Heart right ventricle (tissue), 16 donors: ENCODE measurements at regions of chr11 and their contacts with region 1.

Region 1: DNA sequence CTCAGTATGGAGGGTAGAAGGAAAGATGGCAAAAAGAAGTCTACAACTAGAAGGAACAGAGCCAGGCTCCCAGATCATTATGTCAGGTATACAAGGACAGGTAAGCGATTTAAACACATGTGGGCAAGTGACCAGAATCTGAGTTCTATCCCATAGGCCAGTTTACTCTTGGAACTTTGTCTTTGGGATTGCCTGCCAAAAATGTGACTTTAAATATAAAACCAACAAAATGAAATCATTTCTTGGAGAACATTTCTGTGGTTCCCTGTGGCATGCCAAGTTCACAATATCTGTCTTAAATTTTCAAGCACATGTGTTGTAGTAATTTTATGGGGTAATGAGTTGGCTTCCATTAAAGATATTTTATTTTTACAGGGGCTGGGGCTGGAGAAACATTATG is 141.0 kb downstream of the SLC17A6 start:
- DNase-seq: no peak
- ATAC-seq: no peak
- H3K4me3 ChIP-seq: no peak overlapping the region
- H3K27ac ChIP-seq: no peak overlapping the region
- H3K4me1 ChIP-seq: no peaks in the 10 kb centered on the region
- H3K27me3 ChIP-seq: no peaks in the 10 kb centered on the region
- CTCF ChIP-seq: no peak

Region 2: GRCh38 chr11:22467736-22468135 is 11.5 kb before region 1 on chr11:
- intact Hi-C with region 1: loop called in 1 of 10 experiments (anchors 2 kb)
- DNase-seq: no peak
- ATAC-seq: no peak
- H3K4me3 ChIP-seq: no peak overlapping the region
- H3K27ac ChIP-seq: no peak overlapping the region
- H3K4me1 ChIP-seq: no peaks in the 10 kb centered on the region
- H3K27me3 ChIP-seq: no peaks in the 10 kb centered on the region
- CTCF ChIP-seq: no peak

Region 3: GRCh38 chr11:22577854-22578253 is 98.6 kb after region 1 on chr11:
- intact Hi-C with region 1: no loop called
- DNase-seq: no peak
- ATAC-seq: no peak
- H3K4me3 ChIP-seq: no peak overlapping the region
- H3K27ac ChIP-seq: no peak overlapping the region
- H3K4me1 ChIP-seq: no peaks in the 10 kb centered on the region
- H3K27me3 ChIP-seq: no peaks in the 10 kb centered on the region
- CTCF ChIP-seq: no peak